ENCODE measurements at regions of chr2 and their contacts with region 1.

Region 1: DNA sequence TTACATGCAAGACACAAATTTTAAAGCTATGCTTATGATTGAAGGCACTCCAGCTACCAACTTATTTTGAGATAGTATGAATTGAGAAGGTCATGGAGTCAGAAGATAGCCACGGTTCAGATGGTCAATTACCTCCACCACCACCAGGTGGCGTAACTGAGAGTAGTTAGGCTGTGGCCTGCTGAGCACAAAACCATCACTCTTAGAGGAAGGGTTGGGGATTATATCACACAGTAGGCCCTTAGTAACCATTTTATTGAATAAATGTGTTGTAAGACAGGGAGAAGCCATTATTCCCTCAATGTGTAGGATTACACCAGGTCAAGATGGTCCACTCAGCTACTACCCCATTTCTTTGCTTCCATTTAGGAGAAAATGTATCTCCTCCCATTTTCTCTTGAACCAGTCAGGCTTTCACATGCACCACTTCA is 18.8 kb downstream of the KLHL41 start:
- DNase-seq: peak; percentile 86
- H3K4me3 Mint-ChIP-seq: no peak overlapping the region
- H3K27ac Mint-ChIP-seq: no peak overlapping the region
- H3K4me1 Mint-ChIP-seq: no peaks in the 10 kb centered on the region
- H3K27me3 Mint-ChIP-seq: no peaks in the 10 kb centered on the region

Region 2: GRCh38 chr2:169452080-169452479 is 76.2 kb before region 1 on chr2:
- CTCF ChIA-PET with region 1: no interaction called
- intact Hi-C with region 1: loop called (anchors 1 kb)
- DNase-seq: no peak
- H3K4me3 Mint-ChIP-seq: no peak overlapping the region
- H3K27ac Mint-ChIP-seq: no peak overlapping the region
- H3K4me1 Mint-ChIP-seq: no peaks in the 10 kb centered on the region
- H3K27me3 Mint-ChIP-seq: peaks cover 3% of the 10 kb centered on the region

Region 3: GRCh38 chr2:169877398-169877797 is 349.1 kb after region 1 on chr2:
- CTCF ChIA-PET with region 1: no interaction called
- intact Hi-C with region 1: loop called (anchors 1 kb)
- DNase-seq: peak; percentile 32
- H3K4me3 Mint-ChIP-seq: no peak overlapping the region
- H3K27ac Mint-ChIP-seq: no peak overlapping the region
- H3K4me1 Mint-ChIP-seq: no peaks in the 10 kb centered on the region
- H3K27me3 Mint-ChIP-seq: no peaks in the 10 kb centered on the region

Measured in activated naive CD4-positive, alpha-beta T cell treated with anti-CD3 and anti-CD28 coated beads for 36 hours (primary cell).